ENCODE measurements at regions of chr20 and their contacts with region 1.

Region 1: GRCh38 chr20:50575847-50576720 is 65.9 kb downstream of the PTPN1 start:
- DNase-seq: peak; percentile 38 to 77 (median 61)
- ATAC-seq: peak; percentile 76
- H3K4me3 ChIP-seq: no peak overlapping the region
- H3K4me3 Mint-ChIP-seq: no peak overlapping the region
- H3K27ac ChIP-seq: no peak overlapping the region
- H3K27ac Mint-ChIP-seq: peak overlapping the region; percentile 78
- H3K4me1 ChIP-seq: peaks cover 3% of the 10 kb centered on the region
- H3K4me1 Mint-ChIP-seq: peaks cover 22% of the 10 kb centered on the region
- H3K27me3 ChIP-seq: no peaks in the 10 kb centered on the region
- H3K27me3 Mint-ChIP-seq: no peaks in the 10 kb centered on the region
- CTCF ChIP-seq: no peak

Region 2: GRCh38 chr20:50460460-50461267 is 115.4 kb before region 1 on chr20:
- CTCF ChIA-PET with region 1: interaction called, 28 read pairs
- POLR2A ChIA-PET with region 1: no interaction called
- intact Hi-C with region 1: no loop called
- DNase-seq: peak; percentile 65 to 85 (median 81)
- ATAC-seq: peak; percentile 91
- H3K4me3 ChIP-seq: no peak overlapping the region
- H3K4me3 Mint-ChIP-seq: no peak overlapping the region
- H3K27ac ChIP-seq: no peak overlapping the region
- H3K27ac Mint-ChIP-seq: no peak overlapping the region
- H3K4me1 ChIP-seq: peaks cover 3% of the 10 kb centered on the region
- H3K4me1 Mint-ChIP-seq: peaks cover 4% of the 10 kb centered on the region
- H3K27me3 ChIP-seq: peaks cover 0 to 5% of the 10 kb centered on the region in 2 experiments
- H3K27me3 Mint-ChIP-seq: peaks cover 12% of the 10 kb centered on the region
- CTCF ChIP-seq: peak; percentile 72

Region 3: GRCh38 chr20:50478162-50479036 is 97.7 kb before region 1 on chr20:
- CTCF ChIA-PET with region 1: interaction called, 32 read pairs
- POLR2A ChIA-PET with region 1: interaction called, 4 read pairs
- intact Hi-C with region 1: loop called (anchors 1 to 2 kb)
- DNase-seq: peak; percentile 51 to 85 (median 75)
- ATAC-seq: peak; percentile 100
- H3K4me3 ChIP-seq: no peak overlapping the region
- H3K4me3 Mint-ChIP-seq: no peak overlapping the region
- H3K27ac ChIP-seq: no peak overlapping the region
- H3K27ac Mint-ChIP-seq: no peak overlapping the region
- H3K4me1 ChIP-seq: peaks cover 13% of the 10 kb centered on the region
- H3K4me1 Mint-ChIP-seq: peaks cover 16% of the 10 kb centered on the region
- H3K27me3 ChIP-seq: no peaks in the 10 kb centered on the region
- H3K27me3 Mint-ChIP-seq: no peaks in the 10 kb centered on the region
- CTCF ChIP-seq: peak; percentile 69

Region 4: DNA sequence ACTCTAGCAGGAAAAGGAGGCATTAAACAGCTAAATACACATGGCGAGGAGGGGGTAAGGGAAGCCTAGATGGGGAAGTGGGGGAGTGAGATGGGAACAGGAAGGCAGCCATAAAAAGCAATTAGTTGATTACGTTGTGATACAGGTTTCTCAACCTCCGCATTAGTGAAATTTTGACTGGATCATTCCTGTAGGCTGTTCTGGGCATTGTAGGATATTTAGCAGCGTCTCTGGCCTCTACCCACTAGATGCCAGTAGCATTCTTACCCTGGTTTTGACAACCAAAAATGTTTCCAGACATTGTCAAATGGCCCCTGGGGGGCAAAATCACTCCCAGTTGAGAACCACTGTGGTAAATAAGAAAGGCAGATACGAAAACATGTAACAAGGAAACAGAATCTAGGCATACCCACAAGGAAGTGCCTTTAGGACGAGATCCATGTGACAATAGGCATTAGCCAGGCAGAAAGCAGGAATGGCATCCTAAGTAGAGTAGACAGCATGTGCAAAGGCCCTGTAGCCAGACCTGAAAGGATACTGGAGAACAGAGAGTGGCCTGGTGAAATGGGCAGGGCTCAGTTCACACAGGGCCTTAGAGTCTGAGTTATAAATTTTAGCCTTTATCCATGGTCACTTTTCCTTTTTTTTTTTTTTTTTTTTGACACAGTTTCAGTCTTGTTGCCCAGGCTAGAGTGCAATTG is 91.7 kb before region 1 on chr20:
- CTCF ChIA-PET with region 1: interaction called, 32 read pairs
- POLR2A ChIA-PET with region 1: interaction called, 4 read pairs
- intact Hi-C with region 1: loop called in 1 of 2 experiments (anchors 2 kb)
- DNase-seq: no peak
- ATAC-seq: no peak
- H3K4me3 ChIP-seq: peak overlapping the region; percentile 36 to 64
- H3K4me3 Mint-ChIP-seq: peak overlapping the region; percentile 92
- H3K27ac ChIP-seq: peak overlapping the region; percentile 63 to 93
- H3K27ac Mint-ChIP-seq: peak overlapping the region; percentile 95
- H3K4me1 ChIP-seq: peaks cover 14% of the 10 kb centered on the region
- H3K4me1 Mint-ChIP-seq: peaks cover 23% of the 10 kb centered on the region
- H3K27me3 ChIP-seq: no peaks in the 10 kb centered on the region
- H3K27me3 Mint-ChIP-seq: no peaks in the 10 kb centered on the region
- CTCF ChIP-seq: no peak

Region 5: GRCh38 chr20:50504231-50504823 is 71.8 kb before region 1 on chr20:
- CTCF ChIA-PET with region 1: interaction called, 42 read pairs
- POLR2A ChIA-PET with region 1: no interaction called
- intact Hi-C with region 1: loop called in 1 of 2 experiments (anchors 1 kb)
- DNase-seq: peak in 2 of 9 experiments; percentile 37 to 54
- ATAC-seq: no peak
- H3K4me3 ChIP-seq: no peak overlapping the region
- H3K4me3 Mint-ChIP-seq: no peak overlapping the region
- H3K27ac ChIP-seq: no peak overlapping the region
- H3K27ac Mint-ChIP-seq: no peak overlapping the region
- H3K4me1 ChIP-seq: no peaks in the 10 kb centered on the region
- H3K4me1 Mint-ChIP-seq: peaks cover 6% of the 10 kb centered on the region
- H3K27me3 ChIP-seq: no peaks in the 10 kb centered on the region
- H3K27me3 Mint-ChIP-seq: no peaks in the 10 kb centered on the region
- CTCF ChIP-seq: no peak

Region 6: GRCh38 chr20:50595988-50596689 is 20.1 kb after region 1 on chr20:
- CTCF ChIA-PET with region 1: interaction called, 10 read pairs
- POLR2A ChIA-PET with region 1: no interaction called
- intact Hi-C with region 1: no loop called
- DNase-seq: no peak
- ATAC-seq: no peak
- H3K4me3 ChIP-seq: no peak overlapping the region
- H3K4me3 Mint-ChIP-seq: no peak overlapping the region
- H3K27ac ChIP-seq: no peak overlapping the region
- H3K27ac Mint-ChIP-seq: no peak overlapping the region
- H3K4me1 ChIP-seq: no peaks in the 10 kb centered on the region
- H3K4me1 Mint-ChIP-seq: no peaks in the 10 kb centered on the region
- H3K27me3 ChIP-seq: no peaks in the 10 kb centered on the region
- H3K27me3 Mint-ChIP-seq: no peaks in the 10 kb centered on the region
- CTCF ChIP-seq: no peak

Measured in CD8-positive, alpha-beta T cell (primary cell).